CD8-positive, alpha-beta T cell (primary cell): ENCODE measurements at regions of chr5 and their contacts with region 1.

Region 1: GRCh38 chr5:128287740-128288139 is 204.2 kb downstream of the SLC12A2 start:
- DNase-seq: no peak
- ATAC-seq: no peak
- H3K4me3 ChIP-seq: no peak overlapping the region
- H3K4me3 Mint-ChIP-seq: no peak overlapping the region
- H3K27ac ChIP-seq: no peak overlapping the region
- H3K27ac Mint-ChIP-seq: no peak overlapping the region
- H3K4me1 ChIP-seq: no peaks in the 10 kb centered on the region
- H3K4me1 Mint-ChIP-seq: no peaks in the 10 kb centered on the region
- H3K27me3 ChIP-seq: no peaks in the 10 kb centered on the region
- H3K27me3 Mint-ChIP-seq: peaks cover 4% of the 10 kb centered on the region
- CTCF ChIP-seq: no peak

Region 2: DNA sequence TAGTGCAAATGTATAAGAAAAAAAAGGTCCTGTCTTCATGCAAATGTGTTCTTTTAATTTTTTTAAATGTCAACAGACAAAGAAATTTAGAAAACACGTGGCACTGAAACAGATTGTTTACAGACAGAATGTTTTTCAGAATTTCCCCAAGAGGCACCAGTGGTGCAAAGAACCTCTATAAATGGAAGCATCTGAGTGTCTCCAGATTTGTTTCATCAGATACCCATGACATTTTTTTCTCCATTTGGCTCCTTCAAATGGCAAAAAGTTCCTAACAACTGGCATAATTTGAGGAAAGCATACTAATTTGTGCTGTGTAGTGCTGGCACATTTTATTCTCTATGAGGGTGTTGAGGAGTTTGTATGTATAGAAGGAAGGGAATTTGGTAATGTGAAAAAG is 569.6 kb before region 1 on chr5:
- CTCF ChIA-PET with region 1: no interaction called
- POLR2A ChIA-PET with region 1: no interaction called
- intact Hi-C with region 1: loop called in 1 of 2 experiments (anchors 5 kb)
- DNase-seq: no peak
- ATAC-seq: no peak
- H3K4me3 ChIP-seq: no peak overlapping the region
- H3K4me3 Mint-ChIP-seq: no peak overlapping the region
- H3K27ac ChIP-seq: no peak overlapping the region
- H3K27ac Mint-ChIP-seq: no peak overlapping the region
- H3K4me1 ChIP-seq: no peaks in the 10 kb centered on the region
- H3K4me1 Mint-ChIP-seq: no peaks in the 10 kb centered on the region
- H3K27me3 ChIP-seq: peaks cover 0 to 3% of the 10 kb centered on the region in 2 experiments
- H3K27me3 Mint-ChIP-seq: peaks cover 5% of the 10 kb centered on the region
- CTCF ChIP-seq: no peak